Endothelial cell of umbilical vein (primary cell): ENCODE measurements at regions of chr16 and their contacts with region 1.

Region 1: GRCh38 chr16:82169861-82170845 is at the start of gene MPHOSPH6:
- DNase-seq: peak; percentile 92
- H3K4me3 ChIP-seq: peak within 1 kb of the TSS; percentile 63 to 92 (median 86)
- H3K27ac ChIP-seq: peak within 1 kb of the TSS; percentile 72
- H3K4me1 ChIP-seq: peaks cover 12% of the 10 kb centered on the region
- H3K27me3 ChIP-seq: peaks cover 9 to 17% of the 10 kb centered on the region in 2 experiments
- CTCF ChIP-seq: no peak
- POLR2A ChIP-seq: peak; percentile 74
- total RNA-seq, gene MPHOSPH6: 32.0 and 32.5 TPM in 2 replicates

Region 2: GRCh38 chr16:82192665-82193064 is 22.5 kb after region 1 on chr16:
- CTCF ChIA-PET with region 1: interaction called, 5 read pairs
- POLR2A ChIA-PET with region 1: interaction called, 4 read pairs
- dilution Hi-C with region 1: no loop called
- intact Hi-C with region 1: loop called (anchors 1 kb)
- DNase-seq: peak; percentile 86
- H3K4me3 ChIP-seq: no peak overlapping the region
- H3K27ac ChIP-seq: peak overlapping the region; percentile 59
- H3K4me1 ChIP-seq: peaks cover 30% of the 10 kb centered on the region
- H3K27me3 ChIP-seq: no peaks in the 10 kb centered on the region
- CTCF ChIP-seq: no peak
- POLR2A ChIP-seq: peak; percentile 56

Region 3: DNA sequence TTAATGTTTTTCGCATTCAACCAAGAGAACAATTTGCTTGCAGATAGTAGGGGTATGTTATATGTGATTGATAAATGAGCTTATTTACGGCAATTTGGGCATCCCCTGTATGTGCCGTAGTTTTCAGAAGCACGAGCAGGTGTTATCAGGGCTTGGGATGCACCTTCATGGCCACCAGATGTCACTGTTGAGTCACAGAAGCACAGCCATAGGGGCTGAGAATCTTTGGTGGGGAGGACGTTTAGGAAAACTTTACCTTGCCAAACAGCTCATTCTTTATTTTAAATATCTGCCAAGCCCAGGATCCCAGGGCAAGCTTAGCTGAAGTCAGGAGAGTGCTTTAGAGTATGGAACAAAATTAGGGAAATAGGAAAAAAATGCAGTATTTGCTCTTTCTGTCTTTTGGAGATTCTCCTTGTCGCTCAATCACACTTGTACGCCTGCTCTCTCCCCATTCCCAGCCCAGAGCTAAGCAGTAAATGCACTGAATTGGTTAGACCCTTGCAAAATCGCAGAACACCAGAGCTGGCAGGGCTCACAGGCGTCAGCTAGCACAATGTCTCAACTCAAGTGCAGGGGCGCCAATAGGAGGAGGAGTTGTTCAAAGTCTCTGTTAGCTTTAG is 93.5 kb after region 1 on chr16:
- CTCF ChIA-PET with region 1: no interaction called
- POLR2A ChIA-PET with region 1: no interaction called
- dilution Hi-C with region 1: no loop called
- intact Hi-C with region 1: no loop called
- DNase-seq: peak; percentile 55
- H3K4me3 ChIP-seq: no peak overlapping the region
- H3K27ac ChIP-seq: no peak overlapping the region
- H3K4me1 ChIP-seq: no peaks in the 10 kb centered on the region
- H3K27me3 ChIP-seq: peaks cover 4 to 13% of the 10 kb centered on the region in 2 experiments
- CTCF ChIP-seq: peak; percentile 84 to 85
- POLR2A ChIP-seq: no peak